ENCODE measurements at regions of chr14 and their contacts with region 1.

Region 1: DNA sequence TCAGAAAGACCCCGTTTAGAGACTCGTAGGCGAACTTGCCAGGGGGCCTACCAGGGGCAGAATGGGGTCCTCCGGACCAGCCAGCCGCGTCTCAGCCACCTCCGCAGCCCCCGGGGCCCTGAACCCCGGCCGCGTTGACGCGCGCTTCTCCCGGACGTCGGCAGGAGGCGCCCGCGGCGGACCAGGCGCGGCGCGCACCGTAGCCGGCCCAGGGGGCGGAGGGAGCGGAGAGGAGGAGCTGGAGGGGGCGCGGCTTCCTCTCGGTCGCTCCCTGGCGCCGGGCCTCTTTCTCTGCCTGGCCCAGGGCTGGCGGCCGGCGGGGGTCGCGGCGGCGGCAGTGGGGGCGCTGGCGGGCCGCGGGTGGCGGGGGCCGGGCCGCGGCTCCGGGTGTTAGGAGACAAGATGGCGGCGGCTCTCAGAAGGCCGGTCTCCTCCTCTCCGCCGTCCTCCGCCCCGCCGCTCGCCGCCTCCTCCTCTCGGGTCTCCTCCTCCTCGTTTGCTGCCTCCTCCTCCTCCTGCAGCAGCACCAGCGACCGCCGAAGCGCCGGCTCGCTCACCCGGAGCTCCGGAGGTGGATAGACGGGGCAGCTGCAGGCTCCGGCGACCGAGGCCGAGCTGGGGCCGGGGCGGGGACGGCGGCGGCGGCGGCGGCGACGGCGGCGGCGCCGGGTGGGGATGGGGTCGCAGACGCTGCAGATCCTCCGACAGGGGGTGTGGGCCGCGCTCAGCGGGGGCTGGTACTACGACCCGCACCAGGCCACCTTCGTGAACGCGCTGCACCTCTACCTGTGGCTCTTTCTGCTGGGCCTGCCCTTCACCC is at the start of gene PCNX1:
- DNase-seq: peak; percentile 90
- H3K4me3 Mint-ChIP-seq: peak within 1 kb of the TSS; percentile 97
- H3K27ac Mint-ChIP-seq: peak within 1 kb of the TSS; percentile 86
- H3K4me1 Mint-ChIP-seq: peaks cover 72% of the 10 kb centered on the region
- H3K27me3 Mint-ChIP-seq: no peaks in the 10 kb centered on the region
- total RNA-seq, gene PCNX1: 39.2 to 44.4 TPM

Region 2: DNA sequence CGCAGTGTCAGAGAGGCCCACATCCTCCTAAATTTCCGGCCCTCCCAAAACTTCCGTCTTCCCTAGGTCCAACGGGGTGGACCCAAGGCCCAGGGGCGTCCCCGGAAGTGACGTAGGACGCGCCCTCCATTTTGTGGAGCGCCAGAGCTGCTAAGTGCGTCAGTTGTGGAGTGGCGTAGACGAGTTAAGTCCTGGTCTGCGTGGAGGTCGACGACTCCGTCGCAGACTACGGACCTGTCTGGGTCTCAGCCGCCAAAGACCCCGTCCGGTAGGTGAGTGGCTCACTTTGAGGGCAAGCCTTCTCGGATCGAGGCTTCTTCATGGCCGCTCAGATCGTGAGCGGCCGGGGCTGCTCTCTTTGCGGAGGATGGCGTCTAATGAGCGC is 1140.4 kb before region 1 on chr14 and contains the start of gene SRSF5:
- CTCF ChIA-PET with region 1: no interaction called
- POLR2A ChIA-PET with region 1: no interaction called
- intact Hi-C with region 1: loop called (anchors 10 kb)
- DNase-seq: peak; percentile 96
- H3K4me3 Mint-ChIP-seq: peak within 1 kb of the TSS; percentile 99
- H3K27ac Mint-ChIP-seq: peak within 1 kb of the TSS; percentile 99
- H3K4me1 Mint-ChIP-seq: peaks cover 73% of the 10 kb centered on the region
- H3K27me3 Mint-ChIP-seq: no peaks in the 10 kb centered on the region
- total RNA-seq, gene SRSF5: 289 to 303 TPM

Region 3: GRCh38 chr14:70816525-70816924 is 90.9 kb before region 1 on chr14:
- CTCF ChIA-PET with region 1: interaction called, 42 read pairs
- POLR2A ChIA-PET with region 1: interaction called, 7 read pairs
- intact Hi-C with region 1: loop called (anchors 2 kb)
- DNase-seq: no peak
- H3K4me3 Mint-ChIP-seq: no peak overlapping the region
- H3K27ac Mint-ChIP-seq: no peak overlapping the region
- H3K4me1 Mint-ChIP-seq: peaks cover 8% of the 10 kb centered on the region
- H3K27me3 Mint-ChIP-seq: no peaks in the 10 kb centered on the region

Region 4: GRCh38 chr14:70873627-70874026 is 33.8 kb before region 1 on chr14:
- CTCF ChIA-PET with region 1: interaction called, 199 read pairs
- POLR2A ChIA-PET with region 1: interaction called, 4 read pairs
- intact Hi-C with region 1: loop called (anchors 5 kb)
- DNase-seq: no peak
- H3K4me3 Mint-ChIP-seq: no peak overlapping the region
- H3K27ac Mint-ChIP-seq: no peak overlapping the region
- H3K4me1 Mint-ChIP-seq: peaks cover 19% of the 10 kb centered on the region
- H3K27me3 Mint-ChIP-seq: no peaks in the 10 kb centered on the region

Region 5: GRCh38 chr14:70919774-70920173 is 12.4 kb after region 1 on chr14:
- CTCF ChIA-PET with region 1: interaction called, 42 read pairs
- POLR2A ChIA-PET with region 1: interaction called, 4 read pairs
- intact Hi-C with region 1: loop called (anchors 1 kb)
- DNase-seq: peak; percentile 44
- H3K4me3 Mint-ChIP-seq: peak overlapping the region; percentile 36
- H3K27ac Mint-ChIP-seq: peak overlapping the region; percentile 79
- H3K4me1 Mint-ChIP-seq: peaks cover 86% of the 10 kb centered on the region
- H3K27me3 Mint-ChIP-seq: no peaks in the 10 kb centered on the region

Region 6: DNA sequence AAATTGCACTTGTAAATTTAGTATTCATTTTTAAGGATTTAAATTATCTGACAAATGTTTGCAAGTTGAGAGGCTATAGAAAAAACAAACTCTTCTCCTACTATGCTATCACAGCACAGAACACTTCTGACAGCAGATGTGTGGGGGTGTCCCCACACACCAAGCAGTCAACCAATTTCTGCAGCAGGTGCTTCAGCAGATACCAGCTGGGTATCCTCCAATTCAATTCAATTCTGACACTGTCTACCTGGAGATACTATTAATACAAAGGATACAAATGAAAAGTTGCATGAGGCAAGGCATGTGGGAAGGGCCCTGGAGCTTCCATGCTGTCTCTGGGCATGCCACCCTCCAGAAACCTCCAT is 34.9 kb after region 1 on chr14:
- CTCF ChIA-PET with region 1: interaction called, 27 read pairs
- POLR2A ChIA-PET with region 1: interaction called, 4 read pairs
- intact Hi-C with region 1: no loop called
- DNase-seq: no peak
- H3K4me3 Mint-ChIP-seq: no peak overlapping the region
- H3K27ac Mint-ChIP-seq: peak overlapping the region; percentile 74
- H3K4me1 Mint-ChIP-seq: peaks cover 73% of the 10 kb centered on the region
- H3K27me3 Mint-ChIP-seq: no peaks in the 10 kb centered on the region

Region 7: DNA sequence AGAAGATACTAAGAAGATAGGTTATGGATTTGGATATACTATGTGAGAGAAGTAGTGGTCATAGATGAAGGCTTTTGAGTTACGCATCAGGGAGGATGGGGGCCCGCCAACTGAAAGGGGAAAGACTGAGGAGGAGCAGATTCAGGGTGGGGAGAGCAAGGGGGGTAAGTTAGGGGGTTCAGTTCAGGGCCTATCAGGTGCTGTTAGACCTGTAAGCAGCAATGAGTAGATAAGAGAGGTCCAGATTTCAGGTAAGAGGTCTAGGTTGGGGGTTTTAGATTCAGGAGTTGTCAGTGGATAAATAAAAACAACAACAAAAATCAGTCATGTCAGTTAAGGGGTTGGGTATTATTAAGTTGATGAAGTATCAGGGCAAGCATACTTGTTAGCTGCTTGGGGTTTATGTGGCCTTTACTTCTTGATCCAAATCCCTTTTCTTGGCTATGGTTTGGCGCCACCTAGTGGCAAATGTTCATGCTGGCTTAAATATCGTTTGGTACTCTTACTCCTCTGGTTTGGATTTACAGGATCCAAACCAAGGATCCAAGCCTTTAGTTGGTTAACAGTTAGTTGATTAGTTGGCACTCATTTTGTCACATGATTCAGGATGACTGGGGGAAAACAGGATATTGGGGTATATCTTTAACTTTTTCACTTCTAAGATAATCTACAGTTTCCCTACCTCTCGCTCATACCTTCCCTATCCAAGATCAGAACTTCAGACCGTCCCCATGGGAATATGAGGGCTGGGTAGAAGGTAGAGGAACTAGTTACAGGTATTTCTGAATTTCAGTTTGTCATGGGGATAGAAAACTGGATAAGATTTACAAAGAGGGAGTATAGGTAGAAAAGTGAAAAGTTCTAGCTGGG is 65.0 kb after region 1 on chr14:
- CTCF ChIA-PET with region 1: interaction called, 37 read pairs
- POLR2A ChIA-PET with region 1: interaction called, 3 read pairs
- intact Hi-C with region 1: loop called (anchors 1 kb)
- DNase-seq: peak; percentile 88
- H3K4me3 Mint-ChIP-seq: no peak overlapping the region
- H3K27ac Mint-ChIP-seq: peak overlapping the region; percentile 11
- H3K4me1 Mint-ChIP-seq: peaks cover 36% of the 10 kb centered on the region
- H3K27me3 Mint-ChIP-seq: no peaks in the 10 kb centered on the region

Measured in activated CD4-positive, alpha-beta memory T cell treated with anti-CD3 and anti-CD28 coated beads for 36 hours (primary cell).